ENCODE measurements at regions of chr7 and their contacts with region 1.

Region 1: GRCh38 chr7:129163875-129164544 is 19.5 kb downstream of the TSPAN33 start:
- DNase-seq: peak in 5 of 9 donors; percentile 31 to 42 (median 33)
- ATAC-seq: peak; percentile 73
- H3K4me3 ChIP-seq: no peak overlapping the region
- H3K4me3 Mint-ChIP-seq: no peak overlapping the region
- H3K27ac ChIP-seq: no peak overlapping the region
- H3K27ac Mint-ChIP-seq: no peak overlapping the region
- H3K4me1 ChIP-seq: peaks cover 0 to 5% of the 10 kb centered on the region in 2 donors
- H3K4me1 Mint-ChIP-seq: peaks cover 0 to 11% (median 6%) of the 10 kb centered on the region in 7 donors
- H3K27me3 ChIP-seq: no peaks in the 10 kb centered on the region
- H3K27me3 Mint-ChIP-seq: peaks cover 0 to 9% (median 0%) of the 10 kb centered on the region in 5 donors

Region 2: DNA sequence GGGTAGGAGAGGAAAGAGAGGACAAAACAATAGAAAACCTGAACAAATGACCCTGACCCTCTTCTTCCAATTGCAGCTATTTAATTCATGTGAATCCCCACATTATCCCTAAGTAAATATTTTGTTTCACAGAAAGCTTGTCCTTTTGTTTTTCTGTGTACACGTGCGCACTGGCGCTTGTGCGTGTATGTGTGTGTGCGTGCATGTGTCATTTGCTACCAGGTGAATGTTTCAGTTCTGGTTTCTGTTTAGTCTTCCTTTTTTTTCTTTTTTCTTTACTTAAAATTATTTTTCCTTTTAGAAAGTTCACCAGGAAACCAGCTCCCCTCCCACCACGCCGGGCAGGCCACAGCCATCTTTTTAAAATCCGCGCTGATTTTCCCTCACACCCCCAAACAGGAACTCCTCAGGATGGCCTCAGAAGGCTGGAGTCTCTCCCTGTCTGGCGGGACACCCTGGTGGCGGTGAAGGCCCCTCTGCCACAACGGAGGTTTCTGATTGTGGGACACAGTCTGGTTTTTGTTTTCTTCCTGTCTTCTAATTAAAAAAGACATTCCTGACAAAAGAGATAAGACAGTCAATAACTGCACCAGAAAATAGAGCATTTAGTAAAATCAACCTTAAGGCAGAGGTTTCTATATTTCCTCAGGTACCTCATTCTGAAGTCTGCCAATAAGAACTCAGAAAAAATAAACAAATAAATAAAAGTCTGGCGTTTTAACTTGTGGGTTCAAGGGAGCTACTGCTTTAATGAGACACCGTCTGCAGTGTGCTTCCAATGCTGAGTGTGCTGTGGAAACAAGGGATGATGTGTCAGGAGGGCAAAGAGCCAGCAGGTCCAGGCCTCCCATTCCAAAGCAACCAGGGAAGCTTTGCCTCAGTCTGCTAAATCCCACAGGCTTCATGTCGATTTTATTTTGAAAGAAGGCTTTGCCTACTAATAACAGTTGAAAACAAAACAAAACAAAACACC is 208.9 kb before region 1 on chr7:
- CTCF ChIA-PET with region 1: no interaction called
- POLR2A ChIA-PET with region 1: no interaction called
- intact Hi-C with region 1: no loop called
- DNase-seq: no peak
- ATAC-seq: no peak
- H3K4me3 ChIP-seq: no peak overlapping the region
- H3K4me3 Mint-ChIP-seq: no peak overlapping the region
- H3K27ac ChIP-seq: no peak overlapping the region
- H3K27ac Mint-ChIP-seq: peak overlapping the region in 1 of 9 donors; percentile 4
- H3K4me1 ChIP-seq: no peaks in the 10 kb centered on the region
- H3K4me1 Mint-ChIP-seq: peaks cover 0 to 3% (median 0%) of the 10 kb centered on the region in 7 donors
- H3K27me3 ChIP-seq: no peaks in the 10 kb centered on the region
- H3K27me3 Mint-ChIP-seq: no peaks in the 10 kb centered on the region

Region 3: GRCh38 chr7:129210256-129210988 is 46.4 kb after region 1 on chr7:
- CTCF ChIA-PET with region 1: interaction called, 14 read pairs
- POLR2A ChIA-PET with region 1: no interaction called
- intact Hi-C with region 1: loop called (anchors 1 kb)
- DNase-seq: peak; percentile 26 to 76 (median 51)
- ATAC-seq: peak; percentile 81
- H3K4me3 ChIP-seq: no peak overlapping the region
- H3K4me3 Mint-ChIP-seq: no peak overlapping the region
- H3K27ac ChIP-seq: no peak overlapping the region
- H3K27ac Mint-ChIP-seq: peak overlapping the region in 1 of 9 donors; percentile 51
- H3K4me1 ChIP-seq: no peaks in the 10 kb centered on the region
- H3K4me1 Mint-ChIP-seq: peaks cover 0 to 2% (median 0%) of the 10 kb centered on the region in 7 donors
- H3K27me3 ChIP-seq: no peaks in the 10 kb centered on the region
- H3K27me3 Mint-ChIP-seq: peaks cover 0 to 6% (median 3%) of the 10 kb centered on the region in 5 donors

Region 4: DNA sequence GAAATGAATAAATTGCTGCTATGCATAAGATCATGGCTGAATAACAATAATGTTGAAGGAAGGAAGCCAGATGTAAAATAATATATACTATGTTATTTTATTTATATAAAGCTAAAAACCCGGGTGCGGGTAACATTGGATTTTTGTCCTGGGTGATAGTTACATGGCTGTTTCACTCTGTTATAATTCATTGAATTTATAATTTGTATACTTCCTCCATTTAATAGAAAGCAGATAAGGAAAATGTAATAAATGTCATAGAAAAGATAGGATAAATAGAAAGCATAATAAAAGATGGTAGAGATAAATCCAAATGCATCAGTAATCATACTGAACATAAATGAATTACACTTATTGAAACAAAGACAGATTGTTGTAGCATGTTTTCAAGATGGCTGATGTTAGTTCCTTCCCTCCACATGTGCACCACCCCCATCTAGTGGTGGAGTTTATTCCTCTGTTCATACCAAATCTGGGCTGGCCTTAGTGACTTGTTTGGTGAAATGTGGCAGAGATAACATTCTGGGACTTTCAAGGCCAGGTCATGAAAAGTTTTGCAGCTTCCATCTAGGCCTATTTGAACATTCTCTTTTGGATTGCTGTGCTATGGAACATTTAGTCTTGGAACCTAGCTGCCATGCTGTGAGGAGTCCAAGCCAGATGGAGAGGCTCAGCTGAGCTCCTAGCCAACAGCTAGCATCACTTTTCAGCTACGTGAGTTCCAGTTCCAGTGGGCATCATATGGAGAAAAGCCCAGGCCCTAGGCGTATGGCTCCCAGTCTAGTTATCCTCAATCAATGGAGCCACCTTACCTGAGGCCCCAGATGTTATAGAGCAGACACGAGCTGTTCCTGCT is 107.7 kb after region 1 on chr7:
- CTCF ChIA-PET with region 1: interaction called, 4 read pairs
- POLR2A ChIA-PET with region 1: no interaction called
- intact Hi-C with region 1: loop called in 1 of 2 experiments (anchors 1 kb)
- DNase-seq: peak; percentile 18 to 80 (median 74)
- ATAC-seq: peak; percentile 98
- H3K4me3 ChIP-seq: no peak overlapping the region
- H3K4me3 Mint-ChIP-seq: peak overlapping the region in 8 of 10 donors; percentile 25 to 75 (median 60)
- H3K27ac ChIP-seq: no peak overlapping the region
- H3K27ac Mint-ChIP-seq: peak overlapping the region in 3 of 9 donors; percentile 50 to 86 (median 73)
- H3K4me1 ChIP-seq: no peaks in the 10 kb centered on the region
- H3K4me1 Mint-ChIP-seq: peaks cover 7 to 20% (median 11%) of the 10 kb centered on the region in 7 donors
- H3K27me3 ChIP-seq: no peaks in the 10 kb centered on the region
- H3K27me3 Mint-ChIP-seq: no peaks in the 10 kb centered on the region

Region 5: GRCh38 chr7:129462420-129462819 is 298.4 kb after region 1 on chr7:
- CTCF ChIA-PET with region 1: no interaction called
- POLR2A ChIA-PET with region 1: no interaction called
- intact Hi-C with region 1: no loop called
- DNase-seq: no peak
- ATAC-seq: no peak
- H3K4me3 ChIP-seq: no peak overlapping the region
- H3K4me3 Mint-ChIP-seq: no peak overlapping the region
- H3K27ac ChIP-seq: no peak overlapping the region
- H3K27ac Mint-ChIP-seq: no peak overlapping the region
- H3K4me1 ChIP-seq: no peaks in the 10 kb centered on the region
- H3K4me1 Mint-ChIP-seq: no peaks in the 10 kb centered on the region
- H3K27me3 ChIP-seq: no peaks in the 10 kb centered on the region
- H3K27me3 Mint-ChIP-seq: no peaks in the 10 kb centered on the region